ENCODE measurements at regions of chr3 and their contacts with region 1.

Region 1: GRCh38 chr3:8324740-8325139 is 176.9 kb upstream of the LMCD1 start:
- DNase-seq: peak in 41 of 42 donors; percentile 8 to 87 (median 60)

Region 2: DNA sequence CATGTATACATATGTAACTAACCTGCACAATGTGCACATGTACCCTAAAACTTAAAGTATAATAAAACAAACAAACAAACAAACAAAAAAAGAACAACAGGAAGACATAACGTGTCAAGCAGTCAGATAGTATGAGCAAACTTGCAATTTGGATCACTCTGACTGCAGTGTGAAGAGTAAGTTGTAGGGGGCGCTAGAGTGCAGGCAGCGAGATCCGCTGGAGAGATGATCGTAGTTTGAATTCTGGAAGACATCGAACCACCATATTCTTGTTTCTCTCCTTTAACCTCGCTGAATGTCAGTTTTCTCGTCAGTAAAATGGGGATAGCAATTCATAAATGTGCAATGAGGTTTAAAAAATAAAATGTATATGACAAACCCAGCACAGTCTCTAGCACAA is 11.7 kb after region 1 on chr3:
- intact Hi-C with region 1: no loop called
- DNase-seq: no peak

Region 3: DNA sequence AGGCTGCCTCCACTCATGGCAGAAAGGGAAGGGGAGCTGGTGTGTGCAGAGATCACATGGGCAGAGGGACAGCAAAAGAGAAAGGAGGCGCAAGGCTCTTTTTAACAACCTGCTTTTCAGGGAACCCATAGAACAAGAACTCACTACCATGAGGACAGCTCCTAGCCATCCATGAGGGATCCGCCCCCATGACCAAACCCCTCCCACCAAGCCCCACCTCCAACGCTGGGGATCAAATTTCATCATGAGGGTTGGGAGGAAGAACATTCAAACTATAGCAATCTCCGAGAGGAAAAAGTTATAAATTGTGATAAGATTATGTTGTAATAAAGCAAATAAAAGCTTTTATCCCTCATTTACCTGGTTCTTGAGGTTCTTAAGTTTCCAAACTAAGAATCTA is 92.2 kb after region 1 on chr3:
- intact Hi-C with region 1: loop called (anchors 10 kb)
- DNase-seq: no peak

Region 4: DNA sequence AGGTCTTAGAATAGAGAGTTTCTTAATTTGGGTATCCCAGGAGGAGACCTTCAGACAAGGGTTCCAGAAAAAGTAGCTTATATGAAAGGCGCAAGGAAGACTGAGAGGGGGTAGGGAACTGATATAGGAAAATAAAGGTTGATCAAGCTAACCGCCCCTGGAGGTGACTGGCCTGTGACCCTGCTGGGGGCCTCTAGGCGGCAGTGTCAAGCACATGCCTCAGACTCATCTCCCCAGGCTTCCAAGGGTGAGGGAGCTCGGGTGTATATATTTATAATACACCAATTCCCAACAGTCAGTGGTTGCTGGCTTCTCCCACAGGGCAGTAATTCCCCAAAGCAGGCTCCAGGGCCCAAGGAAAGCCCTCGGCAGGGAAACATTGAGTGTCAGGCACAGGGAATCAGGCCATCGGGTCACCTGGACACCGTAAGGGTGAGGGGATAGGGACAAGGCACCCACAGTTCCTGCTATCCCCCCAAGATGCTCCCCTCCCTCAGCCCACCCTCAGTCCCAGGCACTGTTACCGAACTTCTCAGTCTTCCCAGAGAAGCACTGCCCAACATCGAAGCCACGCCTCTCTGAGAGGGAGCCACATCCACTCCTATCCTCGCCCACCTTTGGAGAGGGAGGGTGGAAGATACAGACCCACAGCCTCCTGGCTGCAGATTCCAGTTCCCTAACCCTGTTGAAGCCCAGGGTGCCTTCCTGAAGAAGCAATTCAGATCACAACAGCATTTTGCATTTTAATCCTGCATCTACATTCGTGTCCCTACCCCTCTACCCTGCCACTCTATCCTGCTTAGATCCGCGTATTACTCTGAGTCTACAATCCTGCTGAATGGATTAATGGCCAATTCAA is 389.4 kb after region 1 on chr3:
- intact Hi-C with region 1: no loop called
- DNase-seq: no peak